ENCODE measurements at regions of chr4 and their contacts with region 1.

Region 1: DNA sequence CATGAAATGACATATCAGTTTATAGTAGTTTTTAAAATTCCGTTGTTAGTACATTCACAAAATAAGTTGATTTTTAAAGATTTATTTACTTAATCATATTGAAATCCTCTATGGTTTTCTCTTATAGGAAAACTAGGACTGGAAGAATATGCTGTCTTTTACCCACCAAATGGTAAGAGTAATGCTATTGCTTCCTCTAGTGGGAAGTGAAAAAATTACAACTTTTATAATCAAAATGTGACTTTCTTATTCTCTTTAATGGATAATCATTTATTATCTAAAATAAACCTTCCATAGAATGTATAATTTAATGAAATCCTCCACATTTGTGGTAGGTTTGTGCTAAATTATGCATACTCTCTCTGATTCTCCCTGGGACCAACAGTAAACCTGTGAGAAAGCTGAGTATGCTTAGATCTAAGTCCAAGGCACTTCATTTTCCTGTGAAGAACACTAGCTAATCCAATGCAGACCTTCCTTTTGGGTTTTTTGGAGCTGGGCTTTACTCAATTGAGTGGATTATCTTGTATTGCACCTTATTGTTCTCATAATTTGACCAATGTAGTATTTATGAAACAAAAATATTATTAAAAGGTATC is 136.2 kb downstream of the TBC1D19 start:
- DNase-seq: peak; percentile 49
- H3K4me3 ChIP-seq: no peak overlapping the region
- H3K27ac ChIP-seq: no peak overlapping the region
- H3K4me1 ChIP-seq: peaks cover 36% of the 10 kb centered on the region
- CTCF ChIP-seq: peak; percentile 97

Region 2: GRCh38 chr4:26459054-26459755 is 260.8 kb before region 1 on chr4:
- CTCF ChIA-PET with region 1: interaction called, 3 read pairs
- POLR2A ChIA-PET with region 1: no interaction called
- intact Hi-C with region 1: loop called (anchors 1 kb)
- DNase-seq: peak; percentile 76
- H3K4me3 ChIP-seq: no peak overlapping the region
- H3K27ac ChIP-seq: no peak overlapping the region
- H3K4me1 ChIP-seq: peaks cover 12% of the 10 kb centered on the region
- CTCF ChIP-seq: peak; percentile 85

Region 3: GRCh38 chr4:26473893-26474292 is 246.2 kb before region 1 on chr4:
- CTCF ChIA-PET with region 1: interaction called, 3 read pairs
- POLR2A ChIA-PET with region 1: no interaction called
- intact Hi-C with region 1: loop called (anchors 5 kb)
- DNase-seq: peak; percentile 41
- H3K4me3 ChIP-seq: no peak overlapping the region
- H3K27ac ChIP-seq: no peak overlapping the region
- H3K4me1 ChIP-seq: no peaks in the 10 kb centered on the region
- CTCF ChIP-seq: peak; percentile 70

Region 4: DNA sequence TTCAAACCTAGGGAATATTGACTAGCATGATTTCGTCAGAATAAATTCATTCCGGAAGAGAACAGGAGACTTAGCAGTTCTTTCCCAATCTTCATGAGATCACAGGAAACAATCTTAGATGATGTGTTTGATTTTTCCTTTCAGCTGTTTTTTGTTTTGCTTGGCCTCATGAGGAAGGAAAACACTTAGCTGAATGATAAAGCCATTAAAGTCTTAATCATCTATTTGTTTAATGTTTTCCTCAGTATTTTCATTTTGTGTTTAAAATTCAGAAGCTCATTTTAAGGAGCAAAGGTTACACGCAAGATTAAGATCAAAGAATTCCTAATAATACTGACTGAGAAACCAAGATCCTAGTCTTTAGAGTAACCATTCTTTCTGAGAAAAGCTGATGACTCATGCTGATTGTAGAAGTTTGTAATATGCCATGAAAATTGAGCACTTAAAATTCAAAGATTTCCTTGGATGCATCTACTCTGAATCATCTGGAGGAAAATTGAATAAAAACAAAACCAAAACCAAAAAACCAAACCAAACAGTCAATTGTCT is 151.5 kb before region 1 on chr4:
- CTCF ChIA-PET with region 1: no interaction called
- POLR2A ChIA-PET with region 1: interaction called, 3 read pairs
- intact Hi-C with region 1: loop called (anchors 5 kb)
- DNase-seq: no peak
- H3K4me3 ChIP-seq: no peak overlapping the region
- H3K27ac ChIP-seq: no peak overlapping the region
- H3K4me1 ChIP-seq: no peaks in the 10 kb centered on the region
- CTCF ChIP-seq: no peak

Region 5: GRCh38 chr4:26619784-26620183 is 100.3 kb before region 1 on chr4:
- CTCF ChIA-PET with region 1: no interaction called
- POLR2A ChIA-PET with region 1: no interaction called
- intact Hi-C with region 1: loop called (anchors 5 kb)
- DNase-seq: no peak
- H3K4me3 ChIP-seq: no peak overlapping the region
- H3K27ac ChIP-seq: no peak overlapping the region
- H3K4me1 ChIP-seq: peaks cover 11% of the 10 kb centered on the region
- CTCF ChIP-seq: no peak

Region 6: GRCh38 chr4:26787461-26788340 is 67.6 kb after region 1 on chr4:
- CTCF ChIA-PET with region 1: interaction called, 3 read pairs
- POLR2A ChIA-PET with region 1: interaction called, 14 read pairs
- intact Hi-C with region 1: no loop called
- DNase-seq: peak; percentile 88
- H3K4me3 ChIP-seq: peak overlapping the region; percentile 59
- H3K27ac ChIP-seq: peak overlapping the region; percentile 84
- H3K4me1 ChIP-seq: peaks cover 42% of the 10 kb centered on the region
- CTCF ChIP-seq: peak; percentile 86

Region 7: DNA sequence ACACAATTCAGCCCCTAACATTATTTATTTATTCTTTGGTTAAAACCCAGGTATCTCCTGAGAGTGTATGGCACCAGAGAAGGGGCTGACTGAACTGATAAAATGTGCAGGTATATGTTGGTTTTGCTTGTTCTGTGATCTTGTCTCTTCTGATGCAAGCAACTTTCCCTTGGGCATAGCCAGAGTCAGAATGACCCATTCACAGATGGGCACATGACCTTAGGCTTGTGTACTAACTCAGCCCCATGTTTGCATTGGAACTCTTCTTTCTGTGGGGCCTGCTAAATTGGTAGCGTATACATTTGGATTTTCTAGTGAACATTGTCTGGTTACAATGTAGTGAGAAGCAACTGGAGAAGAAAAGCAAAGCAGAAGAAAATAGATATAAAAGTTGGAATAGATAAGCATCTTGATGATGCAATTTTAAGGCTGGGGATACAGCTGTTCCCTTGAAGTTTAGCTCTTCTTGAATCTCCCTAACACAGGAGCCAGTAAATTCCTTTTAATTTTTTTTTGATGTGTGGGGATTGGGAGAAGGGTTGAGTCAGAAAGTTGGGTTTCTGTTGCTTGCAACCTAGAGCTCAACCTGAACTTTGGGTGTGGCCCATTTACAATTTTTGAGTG is 448.6 kb after region 1 on chr4:
- CTCF ChIA-PET with region 1: no interaction called
- POLR2A ChIA-PET with region 1: no interaction called
- intact Hi-C with region 1: no loop called
- DNase-seq: no peak
- H3K4me3 ChIP-seq: no peak overlapping the region
- H3K27ac ChIP-seq: no peak overlapping the region
- H3K4me1 ChIP-seq: no peaks in the 10 kb centered on the region
- CTCF ChIP-seq: no peak

Measured in OCI-LY7 (cell line).